ENCODE measurements at regions of chr1 and their contacts with region 1.

Region 1: GRCh38 chr1:192580351-192580962 is 4.9 kb downstream of the RGS1 start:
- DNase-seq: no peak
- H3K4me3 Mint-ChIP-seq: peak overlapping the region; percentile 60
- H3K27ac Mint-ChIP-seq: no peak overlapping the region
- H3K4me1 Mint-ChIP-seq: peaks cover 71% of the 10 kb centered on the region
- H3K27me3 Mint-ChIP-seq: peaks cover 8% of the 10 kb centered on the region

Region 2: GRCh38 chr1:191851799-191852595 is 728.5 kb before region 1 on chr1:
- intact Hi-C with region 1: no loop called
- DNase-seq: no peak
- H3K4me3 Mint-ChIP-seq: no peak overlapping the region
- H3K27ac Mint-ChIP-seq: no peak overlapping the region
- H3K4me1 Mint-ChIP-seq: no peaks in the 10 kb centered on the region
- H3K27me3 Mint-ChIP-seq: no peaks in the 10 kb centered on the region

Region 3: GRCh38 chr1:192386051-192386650 is 194.3 kb before region 1 on chr1:
- intact Hi-C with region 1: no loop called
- DNase-seq: no peak
- H3K4me3 Mint-ChIP-seq: no peak overlapping the region
- H3K27ac Mint-ChIP-seq: no peak overlapping the region
- H3K4me1 Mint-ChIP-seq: no peaks in the 10 kb centered on the region
- H3K27me3 Mint-ChIP-seq: no peaks in the 10 kb centered on the region

Region 4: GRCh38 chr1:192506741-192507155 is 73.7 kb before region 1 on chr1:
- intact Hi-C with region 1: loop called (anchors 1 kb)
- DNase-seq: no peak
- H3K4me3 Mint-ChIP-seq: no peak overlapping the region
- H3K27ac Mint-ChIP-seq: no peak overlapping the region
- H3K4me1 Mint-ChIP-seq: no peaks in the 10 kb centered on the region
- H3K27me3 Mint-ChIP-seq: no peaks in the 10 kb centered on the region

Region 5: DNA sequence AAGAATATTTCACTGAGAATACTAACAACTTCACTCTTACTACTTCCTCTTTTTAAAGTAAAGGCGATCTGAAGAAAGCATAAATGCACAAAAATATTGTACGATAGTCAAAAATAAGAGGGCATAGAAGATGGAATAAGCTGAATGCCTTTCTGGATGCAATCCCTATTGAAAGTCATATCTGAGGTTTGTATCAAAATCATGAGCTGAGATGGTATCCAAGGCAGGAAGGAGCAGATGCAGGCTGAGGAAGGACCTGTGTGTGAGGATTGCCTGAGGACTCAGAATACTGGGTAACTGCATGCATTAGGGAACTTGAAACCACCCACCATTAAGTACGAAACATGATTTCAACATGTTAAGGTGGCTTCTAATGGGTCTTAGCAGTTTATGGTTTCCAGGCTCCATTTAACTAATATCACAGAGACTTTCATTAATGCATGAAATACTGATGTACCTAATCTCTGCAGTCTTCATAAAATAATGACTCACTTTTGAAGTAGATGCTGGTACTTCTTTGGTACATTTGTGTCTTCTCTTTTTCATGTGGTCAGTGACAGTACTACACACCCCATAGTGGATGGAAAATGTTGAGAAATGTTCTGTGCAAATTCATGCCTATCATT is 34.4 kb before region 1 on chr1:
- intact Hi-C with region 1: loop called (anchors 1 kb)
- DNase-seq: no peak
- H3K4me3 Mint-ChIP-seq: no peak overlapping the region
- H3K27ac Mint-ChIP-seq: peak overlapping the region; percentile 74
- H3K4me1 Mint-ChIP-seq: peaks cover 79% of the 10 kb centered on the region
- H3K27me3 Mint-ChIP-seq: no peaks in the 10 kb centered on the region

Region 6: DNA sequence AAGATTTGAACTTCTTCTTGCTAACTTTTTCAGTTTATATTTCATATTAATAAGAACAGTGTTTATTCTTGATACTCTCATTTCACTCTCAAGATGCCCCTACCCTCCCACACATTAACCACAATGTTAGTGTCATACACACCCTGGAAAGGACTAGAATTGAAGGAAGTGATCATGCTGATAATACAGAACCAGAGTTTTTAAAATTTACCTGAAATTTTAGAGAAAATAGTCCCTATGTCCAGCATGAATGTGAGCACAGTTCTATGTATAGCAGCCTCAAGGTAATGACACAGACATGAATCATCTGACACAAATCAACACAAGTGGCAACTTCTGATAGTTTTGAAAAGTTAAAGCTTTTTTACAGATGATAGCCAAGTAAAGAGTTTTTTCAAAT is 21.1 kb after region 1 on chr1:
- intact Hi-C with region 1: loop called (anchors 2 kb)
- DNase-seq: no peak
- H3K4me3 Mint-ChIP-seq: no peak overlapping the region
- H3K27ac Mint-ChIP-seq: no peak overlapping the region
- H3K4me1 Mint-ChIP-seq: peaks cover 15% of the 10 kb centered on the region
- H3K27me3 Mint-ChIP-seq: peaks cover 4% of the 10 kb centered on the region

Region 7: GRCh38 chr1:192660613-192661012 is 80.2 kb after region 1 on chr1:
- intact Hi-C with region 1: no loop called
- DNase-seq: no peak
- H3K4me3 Mint-ChIP-seq: no peak overlapping the region
- H3K27ac Mint-ChIP-seq: no peak overlapping the region
- H3K4me1 Mint-ChIP-seq: no peaks in the 10 kb centered on the region
- H3K27me3 Mint-ChIP-seq: no peaks in the 10 kb centered on the region

Region 8: DNA sequence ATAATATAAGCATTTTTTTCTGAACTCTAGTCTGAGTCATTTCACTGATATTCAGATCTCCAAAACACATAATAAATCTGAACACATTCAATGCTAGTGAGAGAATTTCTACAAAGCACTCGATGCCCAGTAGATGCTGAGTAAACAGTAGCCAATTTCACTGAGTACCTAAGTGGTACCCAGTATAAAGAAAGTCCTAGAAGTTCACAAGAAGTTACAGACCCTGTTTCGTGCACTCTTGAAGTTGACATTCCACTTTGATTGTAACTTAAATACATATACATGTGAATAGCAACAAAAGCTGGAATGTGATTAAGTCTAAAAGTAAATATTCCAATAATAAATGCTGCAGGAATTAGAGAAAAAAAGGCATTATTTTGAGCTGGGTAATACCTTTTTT is 195.2 kb after region 1 on chr1:
- intact Hi-C with region 1: no loop called
- DNase-seq: no peak
- H3K4me3 Mint-ChIP-seq: no peak overlapping the region
- H3K27ac Mint-ChIP-seq: no peak overlapping the region
- H3K4me1 Mint-ChIP-seq: no peaks in the 10 kb centered on the region
- H3K27me3 Mint-ChIP-seq: no peaks in the 10 kb centered on the region

Region 9: DNA sequence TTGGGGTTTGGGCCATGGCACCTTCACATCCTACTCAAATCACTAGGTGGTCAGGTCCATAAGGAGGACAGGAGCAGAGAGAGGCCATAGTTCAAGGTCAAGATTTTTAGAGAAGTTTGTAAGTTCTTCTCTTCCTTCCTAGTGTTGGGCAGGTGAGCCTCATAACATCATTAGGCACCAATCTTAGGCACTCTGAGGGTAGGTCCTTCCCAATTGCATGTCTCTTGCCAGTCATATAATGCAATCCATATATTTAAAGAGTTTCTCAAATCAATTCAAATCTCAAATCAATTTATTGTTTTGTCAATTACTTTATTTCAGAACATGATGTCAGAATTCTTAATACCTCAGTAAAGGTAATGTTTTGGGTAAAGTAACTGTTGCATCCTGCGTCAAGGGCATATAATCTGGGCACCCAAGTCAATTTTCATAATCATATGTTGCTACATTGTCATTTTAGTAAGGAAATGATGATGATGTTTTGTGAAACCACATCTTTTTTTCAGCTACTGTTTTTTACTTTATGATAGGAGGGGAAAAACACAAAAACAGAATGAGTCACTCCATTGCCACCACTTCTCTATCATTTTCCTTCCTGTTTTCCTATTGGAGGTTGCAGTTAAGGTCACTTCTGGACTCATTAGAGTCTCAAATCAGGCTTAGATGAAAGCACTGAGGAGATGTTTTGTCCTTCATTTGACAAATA is 356.0 kb after region 1 on chr1:
- intact Hi-C with region 1: loop called (anchors 1 kb)
- DNase-seq: no peak
- H3K4me3 Mint-ChIP-seq: peak overlapping the region; percentile 9
- H3K27ac Mint-ChIP-seq: peak overlapping the region; percentile 85
- H3K4me1 Mint-ChIP-seq: peaks cover 41% of the 10 kb centered on the region
- H3K27me3 Mint-ChIP-seq: no peaks in the 10 kb centered on the region

Region 10: DNA sequence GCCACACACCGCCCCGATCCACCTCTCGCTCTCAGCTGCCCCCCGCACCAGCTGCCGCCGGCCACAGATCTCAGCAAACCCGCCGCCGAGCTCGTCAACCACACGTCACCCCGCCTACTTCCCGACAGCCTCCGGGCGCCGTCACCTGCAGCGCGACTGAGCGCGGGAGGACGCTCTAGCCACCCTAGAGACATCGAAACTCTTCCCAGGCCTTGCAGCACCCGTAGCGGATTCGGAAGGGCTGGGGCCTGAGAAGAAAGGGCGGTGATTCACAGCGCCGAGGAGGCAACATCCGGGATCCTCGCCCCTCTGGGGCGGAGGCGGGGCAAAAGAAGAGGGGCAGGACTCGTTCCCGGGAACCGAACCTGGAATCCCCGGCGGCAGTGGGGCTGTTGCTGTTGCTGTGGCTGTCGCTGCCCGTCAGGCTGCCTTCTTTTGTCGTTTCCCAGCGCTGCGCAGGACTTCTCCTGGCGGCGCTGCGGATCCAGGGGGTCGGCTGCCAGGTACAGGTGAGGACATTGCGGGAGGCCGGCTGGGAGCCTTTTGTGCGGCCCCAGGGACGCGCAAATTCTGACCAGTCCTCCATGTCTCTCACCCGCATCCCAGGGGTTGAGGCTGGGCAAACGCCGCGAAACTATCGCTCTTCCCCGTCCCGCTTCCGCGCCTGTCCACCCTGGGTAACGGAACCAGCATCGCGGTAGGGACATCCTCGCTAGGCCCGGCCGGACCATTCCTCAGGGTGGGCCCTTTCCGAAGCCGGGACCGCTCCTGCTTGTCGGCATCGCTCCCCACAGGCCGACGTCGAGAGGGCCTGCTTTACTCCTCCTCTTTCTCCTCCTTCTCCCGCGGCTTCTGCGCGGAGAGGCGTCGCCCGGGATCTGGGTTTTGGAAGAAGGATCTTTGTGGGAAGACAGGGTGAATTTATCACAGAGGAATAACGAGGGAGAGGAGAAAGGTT is 479.1 kb after region 1 on chr1 and contains the starts of genes RO60 and UCHL5:
- intact Hi-C with region 1: loop called (anchors 2 kb)
- DNase-seq: peak; percentile 95
- H3K4me3 Mint-ChIP-seq: peak within 1 kb of the TSS; percentile 94
- H3K27ac Mint-ChIP-seq: peak within 1 kb of the TSS; percentile 100
- H3K4me1 Mint-ChIP-seq: peaks cover 59% of the 10 kb centered on the region
- H3K27me3 Mint-ChIP-seq: no peaks in the 10 kb centered on the region
- total RNA-seq, gene RO60: 68.7 and 70.0 TPM in 2 replicates
- total RNA-seq, gene UCHL5: 88.1 and 93.1 TPM in 2 replicates

Measured in activated T-helper 1 cell treated with anti-CD3 and anti-CD28 coated beads, Interleukin-12 subunit alpha, Interleukin-12 subunit beta, Interleukin-2, Interleukin-4 antibody, amounts not matched to agents 30 ng/mL and 10 ng/mL and 1 ng/mL, durations not matched to agents 14 hours and 24 hours and 36 hours (primary cell).